CD8-positive, alpha-beta T cell (primary cell): ENCODE measurements at regions of chr2 and their contacts with region 1.

Region 1: GRCh38 chr2:174039551-174040416 is 74.6 kb upstream of the SP3 start:
- DNase-seq: peak; percentile 54 to 93 (median 85)
- ATAC-seq: peak; percentile 94
- H3K4me3 ChIP-seq: peak overlapping the region; percentile 3 to 43
- H3K4me3 Mint-ChIP-seq: peak overlapping the region; percentile 69
- H3K27ac ChIP-seq: peak overlapping the region; percentile 47 to 84
- H3K27ac Mint-ChIP-seq: peak overlapping the region; percentile 87
- H3K4me1 ChIP-seq: peaks cover 5% of the 10 kb centered on the region
- H3K4me1 Mint-ChIP-seq: peaks cover 8% of the 10 kb centered on the region
- H3K27me3 ChIP-seq: no peaks in the 10 kb centered on the region
- H3K27me3 Mint-ChIP-seq: no peaks in the 10 kb centered on the region
- CTCF ChIP-seq: peak; percentile 67

Region 2: DNA sequence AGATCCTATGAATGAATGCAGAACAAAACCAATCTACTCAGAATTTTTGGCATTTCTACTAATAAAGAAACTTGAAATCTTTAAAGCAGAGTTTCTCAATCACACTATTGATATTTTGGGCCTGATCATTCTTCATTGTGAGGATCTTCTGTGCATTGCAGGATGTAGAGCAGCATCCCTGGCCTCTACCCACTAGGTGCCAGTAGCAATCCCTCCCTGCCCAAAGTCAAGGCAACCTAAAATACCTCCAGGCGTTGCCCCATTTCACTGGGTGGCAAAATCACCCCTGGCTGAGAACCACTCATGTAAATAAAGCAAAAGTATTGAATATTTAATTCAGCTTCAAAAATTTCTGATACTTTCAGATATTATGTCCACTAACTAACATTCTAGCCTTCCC is 287.6 kb before region 1 on chr2:
- CTCF ChIA-PET with region 1: no interaction called
- POLR2A ChIA-PET with region 1: no interaction called
- intact Hi-C with region 1: loop called in 1 of 2 experiments (anchors 10 kb)
- DNase-seq: peak in 2 of 9 experiments; percentile 14 to 27
- ATAC-seq: no peak
- H3K4me3 ChIP-seq: no peak overlapping the region
- H3K4me3 Mint-ChIP-seq: no peak overlapping the region
- H3K27ac ChIP-seq: no peak overlapping the region
- H3K27ac Mint-ChIP-seq: no peak overlapping the region
- H3K4me1 ChIP-seq: no peaks in the 10 kb centered on the region
- H3K4me1 Mint-ChIP-seq: no peaks in the 10 kb centered on the region
- H3K27me3 ChIP-seq: no peaks in the 10 kb centered on the region
- H3K27me3 Mint-ChIP-seq: peaks cover 8% of the 10 kb centered on the region
- CTCF ChIP-seq: no peak

Region 3: GRCh38 chr2:173884025-173884802 is 155.6 kb before region 1 on chr2:
- CTCF ChIA-PET with region 1: interaction called, 4 read pairs
- POLR2A ChIA-PET with region 1: no interaction called
- intact Hi-C with region 1: loop called (anchors 1 to 5 kb)
- DNase-seq: peak in 6 of 9 experiments; percentile 5 to 58 (median 37)
- ATAC-seq: no peak
- H3K4me3 ChIP-seq: no peak overlapping the region
- H3K4me3 Mint-ChIP-seq: no peak overlapping the region
- H3K27ac ChIP-seq: no peak overlapping the region
- H3K27ac Mint-ChIP-seq: no peak overlapping the region
- H3K4me1 ChIP-seq: no peaks in the 10 kb centered on the region
- H3K4me1 Mint-ChIP-seq: peaks cover 2% of the 10 kb centered on the region
- H3K27me3 ChIP-seq: no peaks in the 10 kb centered on the region
- H3K27me3 Mint-ChIP-seq: peaks cover 23% of the 10 kb centered on the region
- CTCF ChIP-seq: peak; percentile 24

Region 4: GRCh38 chr2:174023591-174024523 is 15.9 kb before region 1 on chr2:
- CTCF ChIA-PET with region 1: no interaction called
- POLR2A ChIA-PET with region 1: no interaction called
- intact Hi-C with region 1: no loop called
- DNase-seq: peak in 1 of 9 experiments; percentile 44
- ATAC-seq: no peak
- H3K4me3 ChIP-seq: no peak overlapping the region
- H3K4me3 Mint-ChIP-seq: no peak overlapping the region
- H3K27ac ChIP-seq: no peak overlapping the region
- H3K27ac Mint-ChIP-seq: no peak overlapping the region
- H3K4me1 ChIP-seq: no peaks in the 10 kb centered on the region
- H3K4me1 Mint-ChIP-seq: no peaks in the 10 kb centered on the region
- H3K27me3 ChIP-seq: no peaks in the 10 kb centered on the region
- H3K27me3 Mint-ChIP-seq: no peaks in the 10 kb centered on the region
- CTCF ChIP-seq: no peak

Region 5: DNA sequence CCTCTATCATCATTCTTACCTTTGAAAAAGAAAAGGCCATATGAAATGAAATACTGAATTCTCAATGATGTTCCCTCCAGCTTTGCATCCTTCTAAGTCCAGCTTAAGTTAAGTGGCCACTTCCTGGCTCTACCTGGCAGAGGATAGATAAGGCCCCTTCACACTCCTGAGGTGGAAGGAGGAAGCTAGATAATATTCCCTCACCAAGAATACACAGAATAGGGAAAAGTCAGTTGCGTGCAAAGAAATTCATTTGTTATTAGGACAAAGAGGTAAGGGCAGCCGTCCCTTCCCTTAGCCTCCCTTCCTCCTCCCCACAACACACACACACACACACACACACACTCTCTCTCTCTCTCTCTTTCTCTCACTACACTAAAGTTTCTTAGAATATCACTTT is 171.1 kb after region 1 on chr2:
- CTCF ChIA-PET with region 1: no interaction called
- POLR2A ChIA-PET with region 1: no interaction called
- intact Hi-C with region 1: no loop called
- DNase-seq: no peak
- ATAC-seq: no peak
- H3K4me3 ChIP-seq: no peak overlapping the region
- H3K4me3 Mint-ChIP-seq: no peak overlapping the region
- H3K27ac ChIP-seq: no peak overlapping the region
- H3K27ac Mint-ChIP-seq: peak overlapping the region; percentile 7
- H3K4me1 ChIP-seq: no peaks in the 10 kb centered on the region
- H3K4me1 Mint-ChIP-seq: peaks cover 6% of the 10 kb centered on the region
- H3K27me3 ChIP-seq: no peaks in the 10 kb centered on the region
- H3K27me3 Mint-ChIP-seq: no peaks in the 10 kb centered on the region
- CTCF ChIP-seq: no peak

Region 6: DNA sequence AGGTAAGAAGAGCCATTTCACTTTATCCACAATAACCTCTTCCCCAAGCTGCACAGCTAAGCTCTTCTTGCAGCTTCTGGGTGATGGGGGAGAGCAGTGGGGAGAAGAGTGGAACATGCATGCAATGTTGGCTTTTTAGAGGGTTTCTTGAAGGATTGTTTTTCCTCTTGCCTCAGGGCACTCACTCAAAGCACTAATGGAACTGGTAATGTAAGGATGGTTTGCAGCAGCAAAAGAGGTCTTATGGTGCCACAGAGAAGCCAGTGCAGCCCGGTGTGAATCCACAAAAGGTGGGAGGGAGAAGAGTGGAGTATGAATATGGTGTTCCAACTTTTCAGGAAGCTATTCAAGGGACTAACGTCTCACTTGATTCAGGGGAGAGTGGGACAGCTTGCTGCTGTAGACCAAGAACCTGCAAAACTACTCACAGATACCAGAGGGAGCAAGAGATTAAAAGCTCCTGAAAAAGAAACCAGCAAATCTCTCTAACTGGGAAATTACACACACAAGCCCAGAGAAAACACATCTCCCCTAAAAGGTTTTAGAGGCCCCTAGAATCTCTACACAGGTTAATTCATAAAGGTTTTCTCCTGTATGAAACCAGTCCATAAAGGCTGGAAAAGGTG is 849.0 kb after region 1 on chr2:
- CTCF ChIA-PET with region 1: no interaction called
- POLR2A ChIA-PET with region 1: no interaction called
- intact Hi-C with region 1: no loop called
- DNase-seq: no peak
- ATAC-seq: no peak
- H3K4me3 ChIP-seq: no peak overlapping the region
- H3K4me3 Mint-ChIP-seq: no peak overlapping the region
- H3K27ac ChIP-seq: no peak overlapping the region
- H3K27ac Mint-ChIP-seq: no peak overlapping the region
- H3K4me1 ChIP-seq: no peaks in the 10 kb centered on the region
- H3K4me1 Mint-ChIP-seq: no peaks in the 10 kb centered on the region
- H3K27me3 ChIP-seq: no peaks in the 10 kb centered on the region
- H3K27me3 Mint-ChIP-seq: no peaks in the 10 kb centered on the region
- CTCF ChIP-seq: no peak